ENCODE measurements at regions of chr7 and their contacts with region 1.

Region 1: GRCh38 chr7:150988230-150989226 is 2.3 kb upstream of the NOS3 start:
- DNase-seq: peak in 9 of 10 donors; percentile 54 to 84 (median 65)
- H3K4me3 ChIP-seq: peak overlapping the region in 42 of 59 donors; percentile 1 to 49 (median 29)
- H3K27ac ChIP-seq: peak overlapping the region in 43 of 59 donors; percentile 7 to 77 (median 58)
- H3K27me3 ChIP-seq: no peaks in the 10 kb centered on the region
- CTCF ChIP-seq: peak; percentile 51 to 98 (median 94)

Region 2: DNA sequence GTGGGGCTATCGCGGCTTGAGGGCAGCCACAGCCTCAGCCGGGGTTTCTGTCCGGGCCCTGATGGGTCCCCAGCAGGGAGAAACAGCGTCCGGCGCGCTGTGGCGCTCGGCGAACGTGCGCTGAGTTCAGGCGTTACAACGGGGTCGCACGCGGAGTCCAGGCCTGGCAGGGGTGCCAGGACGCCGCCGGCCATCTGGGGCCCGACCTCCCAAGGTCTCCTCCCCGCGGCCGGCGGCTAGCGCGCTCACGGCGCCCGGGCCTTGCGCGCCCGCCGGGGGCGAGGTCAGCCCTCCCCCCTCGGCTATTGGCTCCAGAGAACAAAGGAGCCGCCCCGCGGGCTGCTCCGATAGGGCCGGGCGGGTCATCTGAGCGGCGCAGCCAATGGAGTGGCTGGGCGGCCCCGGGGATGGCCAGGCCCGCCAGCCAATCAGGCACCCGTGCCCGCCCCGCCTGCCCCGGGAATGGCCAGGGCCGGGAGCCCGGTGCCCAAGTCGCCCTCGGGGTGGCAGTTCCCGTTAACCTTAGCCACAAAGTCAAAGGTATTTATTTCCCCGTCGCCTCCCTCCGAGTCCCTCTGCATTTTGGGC is 609.6 kb before region 1 on chr7 and contains the start of gene ZNF775:
- intact Hi-C with region 1: loop called in 1 of 2 experiments (anchors 10 kb)
- DNase-seq: peak; percentile 91 to 99 (median 96)
- H3K4me3 ChIP-seq: peak within 1 kb of the TSS; percentile 67 to 100 (median 93)
- H3K27ac ChIP-seq: peak within 1 kb of the TSS; percentile 87 to 100 (median 97)
- H3K27me3 ChIP-seq: no peaks in the 10 kb centered on the region
- CTCF ChIP-seq: peak in 31 of 56 donors; percentile 0 to 49 (median 23)
- total RNA-seq, gene ZNF775: 6.0 to 19.8 (median 12.1) TPM

Region 3: GRCh38 chr7:150778738-150779301 is 209.7 kb before region 1 on chr7:
- intact Hi-C with region 1: loop called (anchors 5 kb)
- DNase-seq: peak; percentile 72 to 94 (median 82)
- H3K4me3 ChIP-seq: peak overlapping the region in 5 of 59 donors; percentile 1 to 22 (median 18)
- H3K27ac ChIP-seq: no peak overlapping the region
- H3K27me3 ChIP-seq: peaks cover 0 to 13% (median 0%) of the 10 kb centered on the region in 45 donors
- CTCF ChIP-seq: peak; percentile 79 to 98 (median 91)

Region 4: GRCh38 chr7:150898475-150899011 is 90.0 kb before region 1 on chr7:
- intact Hi-C with region 1: loop called (anchors 1 to 2 kb)
- DNase-seq: peak; percentile 77 to 91 (median 86)
- H3K4me3 ChIP-seq: peak overlapping the region in 2 of 59 donors; percentile 2 to 4
- H3K27ac ChIP-seq: no peak overlapping the region
- H3K27me3 ChIP-seq: peaks cover 0 to 27% (median 3%) of the 10 kb centered on the region in 45 donors
- CTCF ChIP-seq: peak; percentile 88 to 99 (median 97)

Region 5: DNA sequence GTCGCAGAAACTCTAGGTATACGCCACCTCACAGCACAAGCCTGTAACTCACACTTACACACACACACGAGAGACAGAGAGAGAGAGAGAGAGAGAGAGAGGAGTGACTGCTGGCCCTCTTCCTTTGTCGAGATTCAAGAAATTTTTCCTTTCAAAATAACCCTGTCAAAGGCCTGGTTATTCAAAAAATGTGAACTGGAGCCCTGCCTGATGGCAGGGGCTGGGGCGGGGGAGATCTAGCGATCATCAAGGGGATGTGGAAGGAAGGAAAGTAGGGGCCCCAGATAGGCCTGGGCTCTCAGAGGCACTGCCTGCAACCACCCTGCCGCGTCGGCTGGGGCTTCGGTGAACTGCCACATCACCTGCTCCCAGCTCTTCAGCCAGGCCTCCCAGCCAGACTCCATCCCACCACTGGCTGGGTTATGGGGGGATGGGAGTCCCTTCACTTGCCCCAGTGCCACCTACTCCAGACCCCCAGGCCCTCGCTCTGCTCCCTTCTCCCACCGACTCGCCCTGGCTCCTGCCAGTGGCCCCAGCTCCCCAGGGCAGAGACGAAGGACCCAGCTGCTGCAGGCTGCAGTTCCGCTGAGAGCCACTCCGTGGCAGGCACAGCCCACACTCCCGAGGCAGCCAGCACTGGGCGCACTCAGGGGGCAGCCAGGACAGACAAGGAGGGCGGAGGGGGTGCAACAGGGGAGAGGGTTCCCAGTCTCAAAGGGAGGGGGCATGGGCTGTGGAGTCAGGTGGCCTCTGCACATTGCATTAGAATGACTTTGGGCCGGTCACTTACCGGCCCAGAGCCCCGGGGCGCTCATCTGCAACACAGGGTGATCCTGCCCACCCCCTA is 25.8 kb before region 1 on chr7:
- intact Hi-C with region 1: loop called (anchors 1 to 2 kb)
- DNase-seq: peak in 9 of 10 donors; percentile 53 to 82 (median 66)
- H3K4me3 ChIP-seq: no peak overlapping the region
- H3K27ac ChIP-seq: peak overlapping the region in 1 of 59 donors; percentile 89
- H3K27me3 ChIP-seq: no peaks in the 10 kb centered on the region
- CTCF ChIP-seq: peak in 55 of 56 donors; percentile 31 to 97 (median 88)

Region 6: DNA sequence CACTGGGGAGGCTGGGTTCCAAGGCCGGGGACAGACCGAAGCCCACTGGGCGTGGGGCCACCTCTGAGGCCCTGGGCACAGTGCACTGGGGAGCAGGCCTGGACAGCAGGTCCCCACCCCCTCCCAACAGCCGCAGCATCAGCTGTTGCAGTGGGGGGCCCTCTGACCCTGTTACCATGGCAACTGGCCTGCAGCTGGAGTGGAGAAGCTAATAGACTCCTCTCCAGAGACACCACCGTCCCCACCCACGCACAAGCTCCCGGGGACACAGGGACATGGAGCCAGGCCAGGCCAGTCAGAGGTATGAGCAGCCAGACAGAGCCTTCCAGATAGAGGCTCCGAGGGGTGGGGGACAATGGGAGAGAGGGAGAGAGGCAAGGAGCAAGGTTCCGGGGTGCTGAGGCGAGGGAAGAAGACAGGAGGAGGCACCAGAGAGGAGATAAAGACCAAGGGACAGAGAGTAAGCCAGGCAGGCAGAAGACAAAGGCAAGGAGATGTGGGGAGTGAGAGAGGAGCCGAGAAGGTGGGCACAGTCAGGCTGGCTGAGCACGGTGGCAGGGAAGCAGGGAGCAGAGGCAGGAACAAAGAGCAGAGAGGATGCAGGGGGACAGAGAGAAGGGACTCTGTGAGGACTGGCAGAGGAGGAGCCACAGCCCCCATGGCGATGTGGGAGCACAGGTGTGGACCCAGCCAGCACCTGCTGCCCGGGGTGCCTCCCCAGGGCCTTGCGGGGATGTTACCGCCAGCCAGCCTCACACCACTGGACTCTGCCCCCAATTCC is 17.1 kb before region 1 on chr7:
- intact Hi-C with region 1: loop called in 1 of 2 experiments (anchors 2 kb)
- DNase-seq: no peak
- H3K4me3 ChIP-seq: peak overlapping the region in 2 of 59 donors; percentile 2 to 20
- H3K27ac ChIP-seq: peak overlapping the region in 28 of 59 donors; percentile 3 to 83 (median 52)
- H3K27me3 ChIP-seq: no peaks in the 10 kb centered on the region
- CTCF ChIP-seq: no peak

Region 7: DNA sequence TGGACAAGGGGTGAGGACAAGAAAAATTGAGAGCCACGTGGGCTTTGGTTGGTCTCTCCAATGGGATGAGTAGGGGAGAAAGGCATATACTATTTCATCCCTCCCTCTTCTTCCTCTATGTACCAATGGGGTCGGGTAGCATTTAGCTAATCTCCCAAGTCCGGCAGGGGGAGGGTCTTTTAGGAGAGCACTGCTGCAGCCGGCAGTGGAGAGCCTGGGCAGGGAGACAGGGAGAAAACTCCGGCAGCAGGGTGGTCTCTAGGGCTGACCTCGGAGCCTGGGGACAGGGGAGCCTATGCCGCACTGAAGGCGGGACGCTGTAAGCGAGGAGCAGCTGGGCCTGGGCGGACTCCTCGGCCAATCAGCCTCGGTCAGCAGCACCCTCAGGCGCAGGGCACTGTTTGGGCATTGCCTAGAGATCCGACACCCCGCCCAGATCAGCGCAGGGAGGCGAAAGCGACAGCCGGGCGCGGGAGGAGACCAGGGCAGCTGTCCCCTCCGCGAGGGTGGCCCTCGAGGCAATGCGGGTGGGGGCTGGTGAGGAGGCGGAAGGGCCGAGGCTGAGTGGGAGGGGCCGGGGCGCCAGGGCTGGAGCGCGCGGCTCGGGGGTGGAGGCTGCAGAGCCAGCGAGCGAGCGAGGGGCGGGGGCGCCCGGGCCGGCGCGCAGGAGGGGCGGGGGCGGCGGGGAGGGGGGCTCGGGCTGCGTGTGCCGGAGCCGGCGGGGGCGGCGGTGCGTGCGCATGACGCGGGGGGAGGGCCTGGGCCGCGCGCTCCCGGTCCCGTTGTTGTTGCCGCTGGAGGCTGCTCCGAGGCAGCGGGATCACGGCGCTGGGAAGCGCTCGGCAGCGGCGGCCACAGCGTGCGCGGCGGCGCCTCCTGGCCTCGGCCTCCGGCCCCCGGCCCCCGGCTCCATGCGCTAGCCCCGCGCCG is 97.4 kb after region 1 on chr7 and contains the start of gene AGAP3:
- intact Hi-C with region 1: no loop called
- DNase-seq: peak; percentile 75 to 94 (median 83)
- H3K4me3 ChIP-seq: peak within 1 kb of the TSS; percentile 58 to 96 (median 85)
- H3K27ac ChIP-seq: peak within 1 kb of the TSS; percentile 88 to 99 (median 95)
- H3K27me3 ChIP-seq: no peaks in the 10 kb centered on the region
- CTCF ChIP-seq: peak in 3 of 56 donors; percentile 10 to 28 (median 12)
- total RNA-seq, gene AGAP3: 309 to 533 (median 426) TPM

Measured in dorsolateral prefrontal cortex (tissue), 120 donors.